Endothelial cell of umbilical vein (primary cell): ENCODE measurements at regions of chr17 and their contacts with region 1.

Region 1: DNA sequence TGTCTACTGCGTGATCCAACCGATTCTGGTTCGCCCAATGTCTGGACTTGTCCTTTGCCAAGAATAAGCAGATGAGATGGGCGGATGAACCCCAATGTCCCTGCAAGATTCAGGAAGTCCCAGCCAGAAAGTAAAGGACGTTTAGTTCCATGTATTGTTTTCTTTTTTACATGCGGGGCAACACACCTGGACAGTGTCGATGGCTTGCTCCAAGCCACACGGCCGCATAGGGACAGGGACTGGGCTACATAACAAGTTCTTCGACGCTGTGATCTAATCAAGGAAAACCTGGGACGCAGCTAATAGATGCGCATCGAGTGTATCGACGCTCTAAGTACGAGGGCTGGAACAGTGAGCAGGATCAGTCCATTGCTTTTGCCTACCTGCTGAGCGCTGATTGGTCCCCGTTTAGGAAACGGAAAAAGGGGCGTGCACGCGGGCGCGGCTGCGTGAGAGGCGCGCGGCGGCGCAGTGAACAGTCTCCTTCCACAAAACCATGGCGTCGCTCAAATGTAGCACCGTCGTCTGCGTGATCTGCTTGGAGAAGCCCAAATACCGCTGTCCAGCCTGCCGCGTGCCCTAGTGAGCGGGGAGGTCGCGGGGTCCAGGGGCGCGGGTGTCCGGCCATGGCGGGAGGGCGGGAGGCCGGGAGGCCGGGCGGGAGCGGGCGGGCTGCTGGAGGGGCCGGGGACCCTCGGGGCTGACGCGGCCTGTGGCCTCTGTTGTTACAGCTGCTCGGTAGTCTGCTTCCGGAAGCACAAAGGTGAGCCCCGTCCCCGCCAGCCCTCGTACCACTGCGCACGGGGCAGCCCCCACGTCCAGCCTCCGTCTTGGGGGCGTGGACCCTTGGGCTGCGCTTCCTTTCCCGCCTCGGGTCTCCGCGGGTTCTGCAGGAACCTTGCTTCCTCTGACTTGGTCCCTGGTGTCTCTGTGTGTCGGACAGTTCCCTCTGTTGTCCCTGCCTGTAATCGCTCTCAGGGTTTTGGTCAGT is at the start of gene ZNHIT3:
- DNase-seq: peak; percentile 94
- H3K4me3 ChIP-seq: peak within 1 kb of the TSS; percentile 36 to 96 (median 82)
- H3K27ac ChIP-seq: peak within 1 kb of the TSS; percentile 3
- H3K4me1 ChIP-seq: peaks cover 17% of the 10 kb centered on the region
- H3K27me3 ChIP-seq: peaks cover 0 to 9% of the 10 kb centered on the region in 2 experiments
- CTCF ChIP-seq: no peak
- POLR2A ChIP-seq: peak; percentile 75
- total RNA-seq, gene ZNHIT3: 31.4 and 34.0 TPM in 2 replicates

Region 2: DNA sequence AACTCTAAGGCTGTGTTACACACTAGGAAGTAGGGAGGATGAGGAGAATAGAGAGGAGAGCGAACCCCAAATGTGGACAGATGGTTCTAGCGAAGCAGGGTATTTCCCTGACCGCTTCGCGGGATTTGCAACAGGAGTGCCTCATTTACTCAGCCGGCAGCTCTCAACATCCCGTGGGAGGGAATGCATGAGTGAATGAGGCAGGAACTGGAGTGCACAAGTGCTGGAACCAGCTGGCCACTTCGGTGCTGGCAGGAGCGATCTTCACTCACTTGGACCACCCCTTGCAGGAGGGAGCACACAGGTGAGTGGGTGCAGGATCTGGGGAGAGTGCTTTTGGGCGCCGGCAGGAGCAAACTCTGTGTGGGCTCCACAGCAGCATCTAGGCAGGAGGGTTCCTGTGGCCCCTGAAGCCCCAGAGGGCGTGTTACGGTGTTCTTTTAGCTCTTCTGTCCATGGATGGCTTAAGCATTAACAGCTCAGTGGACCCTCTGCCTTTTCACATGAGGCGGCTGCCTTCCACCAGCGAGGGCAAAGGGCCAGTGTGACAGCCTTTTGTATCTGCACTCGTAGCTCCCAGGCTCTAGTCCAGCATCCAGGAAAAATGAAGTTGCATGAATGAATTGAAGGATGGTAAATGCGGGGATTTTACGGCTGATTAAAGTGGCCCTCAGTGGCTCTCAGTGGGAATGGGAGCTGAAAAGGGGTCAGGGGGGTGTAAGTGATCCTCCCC is 17.4 kb before region 1 on chr17:
- CTCF ChIA-PET with region 1: interaction called, 10 read pairs
- POLR2A ChIA-PET with region 1: no interaction called
- dilution Hi-C with region 1: no loop called
- intact Hi-C with region 1: no loop called
- DNase-seq: no peak
- H3K4me3 ChIP-seq: no peak overlapping the region
- H3K27ac ChIP-seq: no peak overlapping the region
- H3K4me1 ChIP-seq: no peaks in the 10 kb centered on the region
- H3K27me3 ChIP-seq: peaks cover 0 to 6% of the 10 kb centered on the region in 2 experiments
- CTCF ChIP-seq: no peak
- POLR2A ChIP-seq: no peak

Region 3: GRCh38 chr17:36512641-36513040 is 26.1 kb after region 1 on chr17:
- CTCF ChIA-PET with region 1: no interaction called
- POLR2A ChIA-PET with region 1: no interaction called
- dilution Hi-C with region 1: no loop called
- intact Hi-C with region 1: no loop called
- DNase-seq: no peak
- H3K4me3 ChIP-seq: no peak overlapping the region
- H3K27ac ChIP-seq: no peak overlapping the region
- H3K4me1 ChIP-seq: peaks cover 3% of the 10 kb centered on the region
- H3K27me3 ChIP-seq: no peaks in the 10 kb centered on the region
- CTCF ChIP-seq: no peak
- POLR2A ChIP-seq: no peak

Region 4: DNA sequence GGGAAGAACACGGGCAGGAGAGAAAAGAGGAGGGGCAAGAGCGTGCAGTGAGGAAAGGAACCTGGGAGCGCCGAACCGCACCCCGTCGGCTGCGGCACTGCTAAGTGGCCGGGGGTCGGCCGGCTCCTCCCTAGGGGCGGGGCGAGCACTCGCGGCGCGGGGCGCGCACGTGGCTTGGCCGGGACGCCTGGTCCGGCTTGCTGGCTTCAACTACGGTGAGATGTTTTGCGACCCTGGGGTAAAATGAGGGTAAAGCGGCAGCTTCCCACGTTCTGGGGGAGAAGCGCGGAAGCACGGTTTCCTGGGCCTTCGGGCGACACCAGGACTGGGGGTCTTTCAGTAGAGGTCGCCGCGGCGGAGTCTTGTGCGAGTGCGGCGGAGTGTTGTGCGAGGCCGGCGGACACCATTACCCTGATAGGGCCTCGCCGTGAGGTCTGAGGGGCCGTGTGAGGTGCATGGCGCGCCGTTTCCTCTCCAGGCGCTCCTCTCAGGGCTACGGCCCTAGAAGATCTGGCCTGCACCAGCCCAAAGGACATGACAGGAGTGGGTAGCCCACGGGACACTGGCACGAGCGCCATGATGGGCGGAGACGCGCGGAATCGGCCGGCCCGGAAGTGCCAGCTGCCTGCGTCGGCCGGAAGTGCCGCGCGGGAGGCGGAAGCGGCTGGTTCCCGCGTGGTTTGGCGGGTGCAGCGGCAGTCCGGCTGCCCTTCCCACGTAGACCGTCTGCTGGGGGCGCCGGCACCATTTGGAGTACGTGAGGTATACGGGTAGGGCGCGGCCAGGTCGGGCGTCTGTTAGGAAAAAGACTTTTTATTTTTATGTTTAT is 48.6 kb after region 1 on chr17 and contains the starts of genes MYO19 and PIGW:
- CTCF ChIA-PET with region 1: interaction called, 12 read pairs
- POLR2A ChIA-PET with region 1: no interaction called
- dilution Hi-C with region 1: no loop called
- intact Hi-C with region 1: loop called (anchors 1 kb)
- DNase-seq: peak; percentile 90
- H3K4me3 ChIP-seq: peak within 1 kb of the TSS; percentile 63 to 84 (median 70)
- H3K27ac ChIP-seq: peak within 1 kb of the TSS; percentile 84
- H3K4me1 ChIP-seq: peaks cover 8% of the 10 kb centered on the region
- H3K27me3 ChIP-seq: no peaks in the 10 kb centered on the region
- CTCF ChIP-seq: no peak
- POLR2A ChIP-seq: peak; percentile 94
- total RNA-seq, gene MYO19: 90.3 and 95.7 TPM in 2 replicates
- total RNA-seq, gene PIGW: 13.1 and 16.3 TPM in 2 replicates

Region 5: DNA sequence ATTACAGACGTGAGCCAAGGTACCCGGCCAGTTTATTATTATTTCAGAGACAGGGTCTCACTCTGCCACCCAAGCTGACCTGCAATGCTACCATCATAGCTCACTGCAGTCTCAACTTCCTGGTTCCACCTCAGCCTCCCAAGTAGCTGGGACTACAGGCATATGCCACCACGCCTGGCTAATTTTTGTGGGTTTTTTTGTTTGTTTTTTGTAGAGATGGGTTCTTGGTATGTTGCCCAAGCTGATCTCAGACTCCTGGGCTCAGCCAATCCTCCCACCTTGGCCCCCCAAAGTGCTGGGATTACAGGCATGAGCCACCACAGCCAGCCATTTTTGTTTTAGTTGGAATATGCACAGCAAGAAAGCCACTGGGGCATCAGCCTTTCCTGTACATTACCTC is 230.6 kb after region 1 on chr17:
- CTCF ChIA-PET with region 1: no interaction called
- POLR2A ChIA-PET with region 1: no interaction called
- dilution Hi-C with region 1: no loop called
- intact Hi-C with region 1: no loop called
- DNase-seq: no peak
- H3K4me3 ChIP-seq: no peak overlapping the region
- H3K27ac ChIP-seq: no peak overlapping the region
- H3K4me1 ChIP-seq: peaks cover 4% of the 10 kb centered on the region
- H3K27me3 ChIP-seq: peaks cover 0 to 4% of the 10 kb centered on the region in 2 experiments
- CTCF ChIP-seq: no peak
- POLR2A ChIP-seq: no peak

Region 6: DNA sequence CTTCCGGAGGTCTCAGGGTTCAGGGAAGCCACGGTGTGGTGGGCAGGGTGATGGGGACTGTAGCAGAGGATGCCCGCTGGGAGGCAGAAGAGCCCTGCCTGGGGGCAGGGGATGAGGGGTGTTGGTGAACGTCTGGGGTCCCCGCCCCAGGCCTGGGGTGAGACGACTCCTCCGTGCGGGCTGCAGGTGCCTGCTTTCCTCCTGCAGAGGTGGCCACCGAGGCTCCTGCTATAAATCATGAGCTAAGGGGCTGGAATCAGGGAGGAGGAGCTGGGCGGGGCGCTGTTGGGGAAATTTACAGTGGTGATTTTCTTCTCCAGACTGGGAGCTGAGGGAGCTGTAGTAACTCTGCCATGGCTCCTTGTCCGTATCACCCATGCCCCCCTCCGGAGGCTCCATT is 281.9 kb after region 1 on chr17:
- CTCF ChIA-PET with region 1: no interaction called
- POLR2A ChIA-PET with region 1: no interaction called
- dilution Hi-C with region 1: no loop called
- intact Hi-C with region 1: no loop called
- DNase-seq: no peak
- H3K4me3 ChIP-seq: no peak overlapping the region
- H3K27ac ChIP-seq: no peak overlapping the region
- H3K4me1 ChIP-seq: no peaks in the 10 kb centered on the region
- H3K27me3 ChIP-seq: peaks cover 17 to 19% of the 10 kb centered on the region in 2 experiments
- CTCF ChIP-seq: peak; percentile 7 to 15
- POLR2A ChIP-seq: no peak